Left ventricle myocardium superior (tissue), 1 donor: ENCODE measurements at regions of chr12 and their contacts with region 1.

Region 1: GRCh38 chr12:132614861-132615578 is 3.6 kb upstream of the P2RX2 start:
- DNase-seq: peak; percentile 87
- ATAC-seq: peak; percentile 94

Region 2: DNA sequence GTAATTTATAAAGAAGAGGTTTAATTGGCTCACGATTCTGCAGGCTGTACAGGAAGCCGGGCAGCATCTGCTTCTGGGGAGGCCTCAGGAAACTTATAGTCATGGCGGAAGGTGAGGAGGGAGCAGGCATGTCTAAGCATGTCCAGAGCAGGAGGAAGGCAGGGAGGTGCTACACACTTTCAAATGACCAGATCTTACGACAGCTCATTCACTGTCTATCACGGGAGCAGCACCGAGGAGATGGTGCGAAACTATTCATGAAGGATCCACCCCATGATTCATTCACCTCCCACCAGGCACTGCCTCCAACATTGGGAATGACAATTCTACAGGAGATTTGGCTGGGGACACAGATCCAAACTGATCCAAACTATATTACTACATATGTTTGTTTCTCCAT is 894.1 kb before region 1 on chr12:
- intact Hi-C with region 1: no loop called
- DNase-seq: no peak
- ATAC-seq: no peak

Region 3: DNA sequence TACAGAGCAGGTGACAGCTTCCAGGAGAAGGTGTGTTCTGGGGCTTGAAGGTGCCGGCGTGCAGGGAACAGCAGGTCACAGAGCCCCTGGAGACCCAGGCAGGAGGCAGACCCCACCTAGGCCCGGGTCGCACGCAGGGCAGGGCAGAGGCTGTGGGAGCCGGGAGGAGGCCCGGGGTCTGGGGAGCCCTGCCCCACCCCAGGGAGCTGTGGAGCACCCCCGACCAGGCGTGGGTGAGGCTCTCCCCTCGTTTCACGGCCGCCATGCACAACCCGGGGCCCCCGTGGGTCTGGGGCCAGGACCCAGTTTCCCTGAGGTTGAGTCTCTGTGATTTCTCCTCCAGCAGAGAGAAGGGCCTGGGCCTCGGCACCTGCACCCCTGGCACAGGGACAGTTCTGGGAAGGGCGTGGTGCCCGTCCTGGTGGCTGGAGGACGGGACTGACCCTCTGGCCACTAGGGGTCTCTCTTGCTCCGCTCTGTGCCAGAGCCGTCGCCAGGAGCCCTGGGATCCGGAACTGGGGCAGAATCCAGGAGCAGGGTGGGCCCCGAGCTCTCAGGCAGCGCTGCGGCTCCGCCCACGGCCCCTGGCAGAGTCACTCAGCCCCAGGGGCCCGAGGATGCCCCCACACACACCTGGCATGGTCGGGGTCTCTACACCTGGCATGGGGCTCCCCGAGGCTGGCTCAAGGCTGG is 200.2 kb before region 1 on chr12:
- intact Hi-C with region 1: loop called (anchors 10 kb)
- DNase-seq: peak; percentile 84
- ATAC-seq: peak; percentile 97

Region 4: GRCh38 chr12:132788375-132789098 is 173.5 kb after region 1 on chr12:
- intact Hi-C with region 1: no loop called
- DNase-seq: no peak
- ATAC-seq: no peak